GM10248 (cell line): ENCODE measurements at regions of chr9 and their contacts with region 1.

Region 1: DNA sequence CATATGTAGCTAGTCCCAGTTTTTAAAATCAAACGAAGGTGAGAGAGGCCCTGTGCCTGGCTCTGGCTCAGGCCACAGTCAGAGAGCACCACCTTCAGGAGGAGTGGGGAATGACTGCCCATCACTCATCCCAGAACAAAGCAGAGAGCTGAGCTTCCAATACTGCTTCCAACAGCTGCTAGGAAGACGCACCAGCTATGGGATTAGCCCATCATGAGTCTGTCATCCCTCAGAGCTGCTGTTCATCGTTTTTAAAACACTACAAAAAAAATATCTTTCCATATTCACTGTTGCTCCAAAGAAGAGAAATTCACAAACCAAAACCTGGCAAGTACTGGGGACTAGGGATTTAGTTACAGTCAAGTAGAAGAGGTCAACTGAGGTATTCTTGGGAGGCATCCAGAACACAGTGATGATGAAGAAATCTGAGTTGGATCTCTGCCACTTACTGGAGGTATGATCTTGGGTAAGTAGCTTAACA is 102.4 kb downstream of the CDK5RAP2 start:
- DNase-seq: peak; percentile 39
- CTCF ChIP-seq: peak; percentile 75

Region 2: DNA sequence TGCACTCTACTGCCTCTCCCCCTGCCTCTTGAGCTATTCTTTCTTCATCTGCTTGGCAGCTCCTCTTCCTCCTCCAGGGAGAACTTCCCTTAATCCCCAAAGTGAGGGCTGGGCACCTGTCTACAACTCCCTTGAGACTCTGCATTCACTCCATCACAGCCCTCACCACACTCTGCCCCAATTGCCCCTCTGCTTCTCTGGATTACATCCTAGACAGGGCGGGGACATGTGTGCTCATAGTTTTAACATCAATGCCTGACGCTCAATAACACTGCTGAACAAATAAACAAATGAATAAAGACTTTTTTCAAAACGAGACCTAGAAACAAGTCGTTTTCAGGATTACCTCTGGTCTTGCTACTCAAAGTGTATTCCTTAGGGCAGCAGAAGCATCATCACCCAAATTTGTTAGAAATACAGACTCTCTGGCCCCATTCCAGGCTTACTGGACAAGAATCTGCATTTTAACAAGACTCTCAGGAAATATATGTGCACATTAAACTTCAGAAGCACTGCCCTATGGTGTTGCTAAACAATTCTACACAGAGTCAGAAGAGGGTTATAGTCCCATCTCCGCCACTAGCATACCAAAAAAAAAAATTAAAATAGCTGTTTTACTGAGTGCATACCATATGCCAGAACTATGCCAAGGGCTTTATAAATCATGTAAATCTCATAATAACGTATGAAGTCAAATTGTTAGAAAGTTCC is 13.2 kb before region 1 on chr9:
- CTCF ChIA-PET with region 1: interaction called, 23 read pairs
- POLR2A ChIA-PET with region 1: no interaction called
- DNase-seq: no peak
- CTCF ChIP-seq: no peak